ENCODE measurements at regions of chr2 and their contacts with region 1.

Region 1: DNA sequence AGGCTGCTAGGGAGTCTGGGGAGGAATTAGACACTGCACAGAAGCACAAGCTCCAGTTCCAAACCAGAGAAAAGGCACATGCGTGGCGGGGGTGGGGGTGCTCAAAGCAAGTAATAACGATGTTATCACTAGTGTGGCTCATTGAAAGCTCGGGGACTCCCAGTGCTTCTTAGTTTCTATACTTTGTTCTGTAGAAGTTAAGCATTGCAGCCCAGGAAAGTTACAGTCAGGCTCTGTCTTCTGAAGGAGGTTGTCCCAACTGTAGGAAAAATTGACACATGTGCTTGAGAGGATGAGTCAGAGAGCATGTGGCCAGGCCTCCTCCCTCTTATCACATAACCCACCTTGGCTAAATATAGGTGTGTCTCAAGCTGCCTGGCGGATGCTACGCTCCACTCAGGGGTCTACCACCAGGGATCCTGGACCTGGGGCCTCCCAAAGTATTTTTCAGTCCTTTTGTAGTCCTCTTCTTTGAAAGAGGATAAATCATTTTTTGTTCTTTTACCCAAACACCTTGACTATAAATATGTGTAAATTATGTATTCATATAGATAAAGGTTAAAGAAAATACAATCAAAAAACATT is 3.8 kb downstream of the GALNT5 start:
- DNase-seq: peak; percentile 77
- H3K4me3 Mint-ChIP-seq: peak overlapping the region; percentile 61
- H3K27ac Mint-ChIP-seq: peak overlapping the region; percentile 89
- H3K4me1 Mint-ChIP-seq: peaks cover 34% of the 10 kb centered on the region
- H3K27me3 Mint-ChIP-seq: no peaks in the 10 kb centered on the region

Region 2: GRCh38 chr2:156332534-156333273 is 928.6 kb before region 1 on chr2 and contains the start of gene NR4A2:
- intact Hi-C with region 1: loop called (anchors 5 kb)
- DNase-seq: peak; percentile 96
- H3K4me3 Mint-ChIP-seq: peak within 1 kb of the TSS; percentile 81
- H3K27ac Mint-ChIP-seq: peak within 1 kb of the TSS; percentile 99
- H3K4me1 Mint-ChIP-seq: peaks cover 50% of the 10 kb centered on the region
- H3K27me3 Mint-ChIP-seq: peaks cover 7% of the 10 kb centered on the region
- total RNA-seq, gene NR4A2: 13.2 and 14.1 TPM in 2 replicates

Region 3: GRCh38 chr2:156476850-156477206 is 784.5 kb before region 1 on chr2:
- intact Hi-C with region 1: loop called (anchors 5 kb)
- DNase-seq: peak; percentile 64
- H3K4me3 Mint-ChIP-seq: peak overlapping the region; percentile 57
- H3K27ac Mint-ChIP-seq: peak overlapping the region; percentile 76
- H3K4me1 Mint-ChIP-seq: peaks cover 46% of the 10 kb centered on the region
- H3K27me3 Mint-ChIP-seq: no peaks in the 10 kb centered on the region

Region 4: GRCh38 chr2:157245846-157246764 is 15.2 kb before region 1 on chr2:
- intact Hi-C with region 1: loop called (anchors 1 kb)
- DNase-seq: no peak
- H3K4me3 Mint-ChIP-seq: no peak overlapping the region
- H3K27ac Mint-ChIP-seq: peak overlapping the region; percentile 5
- H3K4me1 Mint-ChIP-seq: peaks cover 10% of the 10 kb centered on the region
- H3K27me3 Mint-ChIP-seq: peaks cover 10% of the 10 kb centered on the region

Region 5: GRCh38 chr2:157312866-157313486 is 51.7 kb after region 1 on chr2:
- intact Hi-C with region 1: loop called (anchors 2 kb)
- DNase-seq: no peak
- H3K4me3 Mint-ChIP-seq: no peak overlapping the region
- H3K27ac Mint-ChIP-seq: no peak overlapping the region
- H3K4me1 Mint-ChIP-seq: peaks cover 4% of the 10 kb centered on the region
- H3K27me3 Mint-ChIP-seq: no peaks in the 10 kb centered on the region

Region 6: GRCh38 chr2:157468931-157469708 is 207.8 kb after region 1 on chr2:
- intact Hi-C with region 1: loop called (anchors 2 kb)
- DNase-seq: peak; percentile 82
- H3K4me3 Mint-ChIP-seq: peak overlapping the region; percentile 78
- H3K27ac Mint-ChIP-seq: peak overlapping the region; percentile 97
- H3K4me1 Mint-ChIP-seq: peaks cover 82% of the 10 kb centered on the region
- H3K27me3 Mint-ChIP-seq: no peaks in the 10 kb centered on the region

Measured in activated CD4-positive, alpha-beta T cell treated with anti-CD3 and anti-CD28 coated beads, Interleukin-2, amount 10 ng/mL, durations not matched to agents 24 days and 14 days (primary cell).